BJ (cell line): ENCODE measurements at regions of chrX and their contacts with region 1.

Region 1: GRCh38 chrX:19535476-19535875 is 20.2 kb upstream of the MAP3K15 start:
- DNase-seq: no peak
- H3K4me3 ChIP-seq: no peak overlapping the region
- H3K27me3 ChIP-seq: no peaks in the 10 kb centered on the region
- CTCF ChIP-seq: peak; percentile 47

Region 2: GRCh38 chrX:19372170-19372546 is 163.3 kb before region 1 on chrX:
- CTCF ChIA-PET with region 1: interaction called, 23 read pairs
- POLR2A ChIA-PET with region 1: no interaction called
- DNase-seq: peak; percentile 9
- H3K4me3 ChIP-seq: peak overlapping the region; percentile 37; the same call in 1 of the 2 replicates
- H3K27me3 ChIP-seq: no peaks in the 10 kb centered on the region; the same call in 1 of the 2 replicates
- CTCF ChIP-seq: peak; percentile 75

Region 3: GRCh38 chrX:20112021-20112797 is 576.7 kb after region 1 on chrX:
- CTCF ChIA-PET with region 1: no interaction called
- POLR2A ChIA-PET with region 1: interaction called, 11 read pairs
- DNase-seq: no peak
- H3K4me3 ChIP-seq: no peak overlapping the region
- H3K27me3 ChIP-seq: peaks cover 3% of the 10 kb centered on the region
- CTCF ChIP-seq: no peak